ENCODE measurements at regions of chr2 and their contacts with region 1.

Region 1: GRCh38 chr2:47070920-47071824 is 83.9 kb downstream of the STPG4 start:
- DNase-seq: peak; percentile 93
- ATAC-seq: peak; percentile 69
- H3K4me3 ChIP-seq: peak overlapping the region in 1 of 3 experiments; percentile 27; a peak in 1 of 6 replicates
- H3K27ac ChIP-seq: peak overlapping the region; percentile 93
- H3K4me1 ChIP-seq: peaks cover 83% of the 10 kb centered on the region
- H3K27me3 ChIP-seq: no peaks in the 10 kb centered on the region
- CTCF ChIP-seq: no peak
- EP300 ChIP-seq: peak; percentile 90 to 92; a peak in 3 of 4 replicates
- POLR2A ChIP-seq: peak in 1 of 2 experiments; percentile 64; a peak in 2 of 4 replicates
- RAD21 ChIP-seq: no peak; the same call in 1 of the 2 replicates

Region 2: DNA sequence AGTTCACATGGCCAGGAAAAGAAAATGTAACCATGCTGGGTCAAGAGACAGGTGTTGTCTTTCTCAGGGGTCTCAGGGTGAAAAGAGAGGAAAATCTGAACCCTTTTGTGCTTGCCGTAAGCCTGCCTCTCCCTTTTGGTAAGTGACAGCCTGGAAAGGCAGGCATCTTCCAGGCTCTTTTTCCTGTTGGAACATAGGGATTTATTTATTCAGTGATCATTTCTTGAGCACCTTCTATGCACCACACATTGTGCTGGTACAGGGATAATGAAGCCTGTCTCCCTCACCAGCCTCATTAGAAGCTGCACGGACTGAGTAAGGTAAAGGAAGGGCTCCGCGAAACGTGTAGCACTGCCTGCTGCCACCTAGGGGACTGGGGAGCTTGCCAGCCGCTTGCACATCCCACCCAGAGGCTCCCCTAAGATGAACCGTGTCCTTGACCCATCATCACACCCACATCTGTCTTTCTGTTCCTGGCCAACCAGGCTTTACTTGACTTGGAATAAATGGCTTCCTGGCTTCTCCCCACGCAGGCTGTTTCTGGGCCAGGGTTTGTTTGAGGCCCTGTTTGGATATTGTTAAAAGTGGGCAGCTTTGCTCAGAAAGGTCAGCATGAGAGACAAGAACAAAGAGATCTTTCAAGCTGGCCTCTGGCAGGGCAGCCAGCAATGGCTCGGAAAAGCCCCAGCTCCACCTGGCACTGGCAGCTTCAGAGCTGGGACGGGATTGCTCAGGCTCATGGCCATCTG is 82.3 kb before region 1 on chr2:
- CTCF ChIA-PET with region 1: no interaction called
- POLR2A ChIA-PET with region 1: interaction called, 5 read pairs
- in situ Hi-C with region 1: no loop called
- intact Hi-C with region 1: loop called (anchors 1 kb)
- DNase-seq: peak; percentile 88
- ATAC-seq: peak; percentile 65
- H3K4me3 ChIP-seq: no peak overlapping the region
- H3K27ac ChIP-seq: peak overlapping the region; percentile 62
- H3K4me1 ChIP-seq: peaks cover 36% of the 10 kb centered on the region
- H3K27me3 ChIP-seq: no peaks in the 10 kb centered on the region
- CTCF ChIP-seq: peak; percentile 73
- EP300 ChIP-seq: no peak
- POLR2A ChIP-seq: no peak
- RAD21 ChIP-seq: no peak

Region 3: GRCh38 chr2:47034973-47035609 is 36.1 kb before region 1 on chr2:
- CTCF ChIA-PET with region 1: no interaction called
- POLR2A ChIA-PET with region 1: no interaction called
- in situ Hi-C with region 1: loop called (anchors 5 kb)
- intact Hi-C with region 1: no loop called
- DNase-seq: peak; percentile 80
- ATAC-seq: peak; percentile 28
- H3K4me3 ChIP-seq: peak overlapping the region in 2 of 3 experiments; percentile 16 to 29; a peak in 3 of 6 replicates
- H3K27ac ChIP-seq: peak overlapping the region; percentile 99
- H3K4me1 ChIP-seq: peaks cover 94% of the 10 kb centered on the region
- H3K27me3 ChIP-seq: no peaks in the 10 kb centered on the region
- CTCF ChIP-seq: 0 out of 2 replicates have a peak, but pooled peaks have one; percentile 1
- EP300 ChIP-seq: peak in 1 of 2 experiments; percentile 60; a peak in 2 of 4 replicates
- POLR2A ChIP-seq: peak in 1 of 2 experiments; percentile 14; a peak in 2 of 4 replicates
- RAD21 ChIP-seq: peak; percentile 25; the same call in 1 of the 2 replicates

Region 4: DNA sequence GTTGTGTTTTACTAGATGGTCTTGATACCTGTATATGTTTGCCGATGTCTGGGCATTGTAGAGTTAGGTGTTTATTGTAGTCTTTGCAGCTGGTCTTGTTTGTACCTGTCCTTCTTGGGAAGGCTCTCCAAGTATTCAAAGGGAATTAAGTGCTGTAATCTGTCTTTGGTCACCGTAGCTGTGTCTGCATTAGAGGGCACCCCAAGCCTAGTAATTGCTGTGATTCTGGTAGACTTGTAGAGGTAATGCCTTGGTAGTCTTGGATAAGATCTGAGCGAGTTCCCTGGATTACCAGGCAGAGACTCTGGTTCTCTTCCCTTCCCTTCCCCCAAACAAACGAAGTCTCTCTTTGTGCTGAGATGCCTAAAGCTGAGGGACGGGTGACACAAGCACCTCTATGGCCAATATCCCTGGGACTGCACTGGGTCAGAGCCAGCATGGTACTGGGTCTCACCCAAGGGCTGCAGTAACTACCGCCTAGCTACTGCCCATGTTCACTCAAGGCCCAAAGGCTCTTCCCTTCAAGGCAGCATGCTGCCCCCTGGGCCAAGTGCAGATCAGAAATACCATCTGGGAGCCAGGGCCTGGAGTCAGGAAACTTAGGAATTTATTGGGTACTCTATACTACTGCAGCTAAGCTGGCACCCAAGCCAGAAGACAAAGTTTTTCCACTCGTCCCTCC is 56.8 kb after region 1 on chr2:
- CTCF ChIA-PET with region 1: no interaction called
- POLR2A ChIA-PET with region 1: interaction called, 14 read pairs
- in situ Hi-C with region 1: no loop called
- intact Hi-C with region 1: no loop called
- DNase-seq: no peak
- ATAC-seq: peak; percentile 23
- H3K4me3 ChIP-seq: no peak overlapping the region
- H3K27ac ChIP-seq: no peak overlapping the region
- H3K4me1 ChIP-seq: peaks cover 44% of the 10 kb centered on the region
- H3K27me3 ChIP-seq: no peaks in the 10 kb centered on the region
- CTCF ChIP-seq: peak; percentile 54
- EP300 ChIP-seq: no peak
- POLR2A ChIP-seq: no peak
- RAD21 ChIP-seq: no peak

Region 5: GRCh38 chr2:47174733-47175361 is 103.7 kb after region 1 on chr2:
- CTCF ChIA-PET with region 1: no interaction called
- POLR2A ChIA-PET with region 1: interaction called, 12 read pairs
- in situ Hi-C with region 1: no loop called
- intact Hi-C with region 1: loop called (anchors 2 kb)
- DNase-seq: peak; percentile 49
- ATAC-seq: no peak
- H3K4me3 ChIP-seq: peak overlapping the region; percentile 89 to 99 (median 97)
- H3K27ac ChIP-seq: peak overlapping the region; percentile 66
- H3K4me1 ChIP-seq: peaks cover 57% of the 10 kb centered on the region
- H3K27me3 ChIP-seq: peaks cover 0 to 2% of the 10 kb centered on the region in 2 experiments; a peak in 1 of 5 replicates
- CTCF ChIP-seq: no peak
- EP300 ChIP-seq: no peak
- POLR2A ChIP-seq: peak in 1 of 2 experiments; percentile 74; a peak in 2 of 4 replicates
- RAD21 ChIP-seq: no peak

Region 6: GRCh38 chr2:47237375-47237821 is 166.2 kb after region 1 on chr2:
- CTCF ChIA-PET with region 1: no interaction called
- POLR2A ChIA-PET with region 1: no interaction called
- in situ Hi-C with region 1: no loop called
- intact Hi-C with region 1: no loop called
- DNase-seq: no peak
- ATAC-seq: no peak
- H3K4me3 ChIP-seq: no peak overlapping the region
- H3K27ac ChIP-seq: no peak overlapping the region
- H3K4me1 ChIP-seq: peaks cover 29% of the 10 kb centered on the region
- H3K27me3 ChIP-seq: peaks cover 9 to 63% of the 10 kb centered on the region in 2 experiments; a peak in 4 of 5 replicates
- CTCF ChIP-seq: no peak
- EP300 ChIP-seq: no peak
- POLR2A ChIP-seq: no peak
- RAD21 ChIP-seq: no peak